Naive thymus-derived CD8-positive, alpha-beta T cell (primary cell): ENCODE measurements at regions of chr7 and their contacts with region 1.

Region 1: GRCh38 chr7:101217388-101218235 is at the starts of genes PLOD3 and ZNHIT1:
- DNase-seq: peak; percentile 89 to 98 (median 96)
- ATAC-seq: peak; percentile 75 to 79
- H3K4me3 Mint-ChIP-seq: peak within 1 kb of the TSS; percentile 93 to 98 (median 96)
- H3K27ac Mint-ChIP-seq: peak within 1 kb of the TSS; percentile 93 to 98 (median 96)
- H3K4me1 Mint-ChIP-seq: peaks cover 24 to 53% (median 40%) of the 10 kb centered on the region in 4 donors
- H3K27me3 Mint-ChIP-seq: no peaks in the 10 kb centered on the region
- polyA plus RNA-seq, gene PLOD3: 8.4 to 12.4 (median 11.1) TPM
- polyA plus RNA-seq, gene ZNHIT1: 50.9 to 66.4 (median 57.4) TPM

Region 2: DNA sequence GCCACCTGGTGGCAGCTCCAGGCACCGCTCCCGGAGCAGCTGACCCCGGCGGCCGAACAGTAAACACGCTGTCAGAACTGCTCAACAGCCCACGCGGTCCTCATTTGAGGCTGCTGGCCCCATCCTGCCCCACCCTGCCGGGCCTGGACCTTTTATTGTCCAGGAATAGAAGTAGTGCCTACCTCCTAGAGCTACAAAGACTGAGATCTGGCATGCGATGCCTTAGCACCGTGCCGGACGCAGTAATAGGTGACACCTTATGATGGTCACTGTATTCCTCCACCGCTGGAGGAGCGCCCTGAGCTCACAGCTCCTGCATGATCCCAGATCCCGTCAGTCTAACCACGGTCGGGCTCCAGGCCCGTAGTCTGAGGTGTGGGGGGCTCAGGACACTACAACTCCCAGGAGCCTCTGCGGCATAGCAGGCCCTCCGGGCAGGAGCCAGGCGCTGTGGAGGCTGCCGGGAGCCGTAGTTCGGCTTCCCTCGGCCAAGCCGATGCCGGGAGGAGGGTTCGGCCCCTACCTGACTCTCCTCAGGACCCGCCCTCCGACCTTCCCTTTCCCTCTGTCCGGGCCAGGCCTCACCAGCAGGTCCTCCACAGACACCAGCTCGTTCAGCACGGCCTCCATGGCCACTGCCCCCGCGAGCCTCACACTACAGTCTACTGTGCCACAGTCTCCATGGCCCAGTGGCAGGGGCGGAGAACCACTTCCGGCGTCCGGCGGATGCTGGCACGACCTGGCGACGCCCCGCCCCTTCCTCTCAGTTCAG is 26.9 kb after region 1 on chr7 and contains the start of gene FIS1:
- POLR2A ChIA-PET with region 1: interaction called, 59 read pairs
- DNase-seq: peak; percentile 84 to 98 (median 91)
- ATAC-seq: peak; percentile 95
- H3K4me3 Mint-ChIP-seq: peak within 1 kb of the TSS; percentile 92 to 100 (median 97)
- H3K27ac Mint-ChIP-seq: peak within 1 kb of the TSS; percentile 89 to 99 (median 97)
- H3K4me1 Mint-ChIP-seq: peaks cover 11 to 58% (median 46%) of the 10 kb centered on the region in 4 donors
- H3K27me3 Mint-ChIP-seq: no peaks in the 10 kb centered on the region
- polyA plus RNA-seq, gene FIS1: 225 to 235 (median 228) TPM

Region 3: GRCh38 chr7:101251871-101252659 is 34.5 kb after region 1 on chr7:
- POLR2A ChIA-PET with region 1: interaction called, 22 read pairs
- DNase-seq: peak; percentile 96 to 99 (median 98)
- ATAC-seq: peak; percentile 98
- H3K4me3 Mint-ChIP-seq: peak overlapping the region; percentile 97 to 100 (median 99)
- H3K27ac Mint-ChIP-seq: peak overlapping the region; percentile 97 to 99 (median 98)
- H3K4me1 Mint-ChIP-seq: peaks cover 14 to 41% (median 33%) of the 10 kb centered on the region in 4 donors
- H3K27me3 Mint-ChIP-seq: peaks cover 0 to 4% (median 0%) of the 10 kb centered on the region in 5 donors